ENCODE measurements at regions of chr1 and their contacts with region 1.

Region 1: DNA sequence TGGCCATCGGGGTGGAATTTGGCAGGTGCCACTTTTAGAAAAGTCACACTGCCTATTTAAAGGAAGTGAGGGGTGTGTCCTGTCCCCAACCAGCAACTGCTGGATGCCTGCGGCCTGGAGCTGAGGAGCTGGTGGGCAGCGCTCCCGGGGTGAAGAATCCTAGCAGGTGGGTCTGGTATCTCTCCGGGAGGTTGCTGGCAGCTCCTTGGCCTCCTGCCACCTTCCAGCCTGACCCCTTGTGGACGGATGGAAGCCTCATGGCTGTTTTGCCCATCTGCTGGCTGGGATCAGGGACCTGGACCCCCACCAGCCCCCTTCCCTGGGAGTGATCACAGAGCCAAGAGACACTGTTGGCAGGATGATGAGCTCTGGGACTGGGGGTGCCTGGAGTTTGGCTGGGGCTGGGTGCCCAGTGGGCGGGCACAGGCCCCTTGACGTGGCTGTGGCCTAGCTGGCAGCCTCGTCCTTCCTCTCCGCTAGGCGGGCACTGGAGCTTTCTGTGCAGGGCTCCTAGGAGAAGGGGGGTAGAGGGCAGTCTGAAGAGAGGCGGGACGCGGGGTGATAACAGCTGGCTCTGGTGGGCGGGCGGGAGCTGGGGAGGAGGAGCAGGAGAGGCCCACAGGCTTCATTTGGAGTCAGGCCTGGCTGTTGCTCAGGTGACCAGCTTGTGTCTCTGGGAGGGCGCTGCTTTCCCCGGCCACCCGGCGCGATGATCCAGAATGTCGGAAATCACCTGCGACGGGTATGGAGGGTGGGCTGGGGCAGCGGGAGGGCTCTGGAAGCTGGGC is at the start of gene ACOT11:
- DNase-seq: no peak
- H3K4me3 ChIP-seq: no peak within 1 kb of the TSS
- H3K27ac ChIP-seq: no peak within 1 kb of the TSS
- H3K4me1 ChIP-seq: peaks cover 3 to 17% (median 9%) of the 10 kb centered on the region in 4 experiments
- H3K27me3 ChIP-seq: no peaks in the 10 kb centered on the region
- CTCF ChIP-seq: peak; percentile 33 to 51 (median 42); a peak in 3 of 4 replicates
- EP300 ChIP-seq: no peak
- POLR2A ChIP-seq: no peak
- RAD21 ChIP-seq: peak; percentile 15 to 19; a peak in 3 of 4 replicates
- total RNA-seq, gene ACOT11: 3.5 and 3.8 TPM in 2 replicates

Region 2: DNA sequence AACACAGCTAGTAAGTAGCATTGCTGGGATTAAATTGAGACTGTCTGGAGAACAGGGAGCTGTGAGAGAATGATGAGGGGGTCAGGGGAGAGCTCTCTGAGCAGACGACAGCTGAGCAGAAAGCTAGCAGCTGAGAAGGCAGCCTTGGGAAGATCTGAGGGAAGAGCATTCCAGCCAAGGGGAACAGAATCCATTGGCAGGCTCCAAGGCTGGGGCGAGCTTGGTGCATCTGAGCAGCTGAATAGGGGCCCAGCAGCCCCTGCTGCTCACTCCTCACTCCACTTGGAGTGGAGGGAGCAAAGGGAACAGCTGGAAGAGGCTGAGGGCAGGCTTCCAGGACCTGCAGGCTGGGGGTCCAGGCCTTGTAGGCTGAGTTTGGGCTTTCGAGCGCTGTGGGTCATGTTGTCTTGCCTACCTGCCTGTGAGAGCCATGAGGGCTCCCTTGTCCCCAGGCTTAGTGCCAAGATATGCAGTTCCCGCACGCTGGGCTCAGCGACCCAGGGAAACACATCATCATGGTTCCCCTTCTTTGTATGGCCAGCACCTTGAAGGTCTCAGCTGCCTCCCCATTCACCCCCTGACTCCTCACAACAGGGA is 10.7 kb after region 1 on chr1:
- CTCF ChIA-PET with region 1: interaction called, 19 read pairs
- POLR2A ChIA-PET with region 1: interaction called, 9 read pairs
- DNase-seq: no peak
- H3K4me3 ChIP-seq: no peak overlapping the region
- H3K27ac ChIP-seq: no peak overlapping the region
- H3K4me1 ChIP-seq: no peaks in the 10 kb centered on the region
- H3K27me3 ChIP-seq: no peaks in the 10 kb centered on the region
- CTCF ChIP-seq: no peak
- EP300 ChIP-seq: no peak
- POLR2A ChIP-seq: no peak
- RAD21 ChIP-seq: no peak

Region 3: GRCh38 chr1:54571803-54572541 is 24.2 kb after region 1 on chr1:
- CTCF ChIA-PET with region 1: interaction called, 19 read pairs
- POLR2A ChIA-PET with region 1: interaction called, 11 read pairs
- DNase-seq: no peak
- H3K4me3 ChIP-seq: peak overlapping the region in 1 of 4 experiments; percentile 8; a peak in 1 of 8 replicates
- H3K27ac ChIP-seq: peak overlapping the region; percentile 19; the same call in 1 of the 2 replicates
- H3K4me1 ChIP-seq: peaks cover 21 to 41% (median 29%) of the 10 kb centered on the region in 4 experiments
- H3K27me3 ChIP-seq: no peaks in the 10 kb centered on the region
- CTCF ChIP-seq: peak in 1 of 3 experiments; percentile 18; a peak in 1 of 4 replicates
- EP300 ChIP-seq: no peak
- POLR2A ChIP-seq: no peak
- RAD21 ChIP-seq: peak in 1 of 2 experiments; percentile 27; a peak in 1 of 4 replicates

Region 4: DNA sequence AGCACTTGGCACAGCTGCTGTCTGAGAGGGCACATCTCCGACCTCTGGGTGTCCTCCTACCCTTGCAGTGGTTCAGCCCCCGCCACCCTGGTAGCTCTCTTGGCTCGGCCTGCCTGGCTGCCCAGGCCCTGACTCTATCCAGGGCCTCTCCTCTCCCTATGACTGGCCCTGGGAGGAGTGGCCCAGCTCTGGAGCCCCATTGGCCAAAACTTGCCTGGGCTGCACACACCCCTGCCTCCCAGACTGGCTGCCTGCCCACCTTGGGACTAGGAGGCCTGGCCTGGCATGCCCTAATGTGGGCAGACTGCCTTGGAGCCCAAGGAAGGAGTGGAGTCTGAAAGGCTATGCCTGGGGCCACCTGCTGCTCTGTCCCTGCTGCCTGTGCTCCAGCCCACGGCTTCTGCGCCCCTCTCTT is 33.8 kb after region 1 on chr1:
- CTCF ChIA-PET with region 1: interaction called, 19 read pairs
- POLR2A ChIA-PET with region 1: interaction called, 4 read pairs
- DNase-seq: no peak
- H3K4me3 ChIP-seq: no peak overlapping the region
- H3K27ac ChIP-seq: 0 out of 2 replicates have a peak overlapping the region, but pooled peaks have one; percentile 73
- H3K4me1 ChIP-seq: peaks cover 19 to 21% (median 20%) of the 10 kb centered on the region in 4 experiments
- H3K27me3 ChIP-seq: no peaks in the 10 kb centered on the region
- CTCF ChIP-seq: no peak
- EP300 ChIP-seq: no peak
- POLR2A ChIP-seq: no peak
- RAD21 ChIP-seq: no peak

Measured in H1 (cell line).